SK-N-SH (cell line): ENCODE measurements at regions of chr10 and their contacts with region 1.

Region 1: GRCh38 chr10:103733045-103733419 is 122.3 kb downstream of the SH3PXD2A start:
- DNase-seq: peak; percentile 86
- H3K4me3 ChIP-seq: no peak overlapping the region
- H3K27ac ChIP-seq: peak overlapping the region; percentile 50 to 99; a peak in 3 of 4 replicates
- H3K4me1 ChIP-seq: peaks cover 16 to 71% of the 10 kb centered on the region in 2 experiments; a peak in 3 of 4 replicates
- H3K27me3 ChIP-seq: no peaks in the 10 kb centered on the region
- CTCF ChIP-seq: no peak
- EP300 ChIP-seq: peak; percentile 68 to 99; a peak in 3 of 4 replicates
- RAD21 ChIP-seq: 0 out of 2 replicates have a peak, but pooled peaks have one; percentile 39

Region 2: DNA sequence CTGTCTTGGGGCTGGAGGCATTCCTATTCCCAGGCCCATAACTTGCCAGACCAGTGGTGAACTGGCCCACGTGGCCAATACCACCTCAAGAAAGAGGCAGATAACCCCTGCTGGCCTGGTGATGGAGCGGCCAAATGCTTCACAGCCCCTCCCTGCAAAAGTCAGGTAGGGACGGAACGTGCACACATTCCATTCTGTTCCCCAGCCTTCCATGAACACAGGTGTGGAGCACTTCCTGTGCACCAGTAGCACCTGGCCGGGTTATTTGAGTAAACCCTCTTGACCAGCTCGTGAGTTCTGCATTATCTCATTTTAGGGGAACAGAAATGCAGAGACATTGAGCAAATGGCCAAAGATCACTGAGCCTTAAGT is 12.1 kb before region 1 on chr10:
- CTCF ChIA-PET with region 1: interaction called, 7 read pairs
- POLR2A ChIA-PET with region 1: interaction called, 17 read pairs
- DNase-seq: no peak
- H3K4me3 ChIP-seq: no peak overlapping the region
- H3K27ac ChIP-seq: peak overlapping the region in 1 of 2 experiments; percentile 93; a peak in 2 of 4 replicates
- H3K4me1 ChIP-seq: peaks cover 17 to 59% of the 10 kb centered on the region in 2 experiments; a peak in 2 of 4 replicates
- H3K27me3 ChIP-seq: no peaks in the 10 kb centered on the region
- CTCF ChIP-seq: no peak
- EP300 ChIP-seq: no peak
- RAD21 ChIP-seq: no peak